T-cell (primary cell): ENCODE measurements at regions of chr5 and their contacts with region 1.

Region 1: GRCh38 chr5:154060606-154061005 is 21.8 kb downstream of the MFAP3 start:
- DNase-seq: no peak
- ATAC-seq: no peak
- H3K4me3 ChIP-seq: no peak overlapping the region
- H3K4me3 Mint-ChIP-seq: no peak overlapping the region
- H3K27ac ChIP-seq: no peak overlapping the region
- H3K27ac Mint-ChIP-seq: no peak overlapping the region
- H3K4me1 ChIP-seq: peaks cover 0 to 8% of the 10 kb centered on the region in 2 experiments
- H3K4me1 Mint-ChIP-seq: peaks cover 20 to 23% (median 22%) of the 10 kb centered on the region in 3 donors
- H3K27me3 ChIP-seq: no peaks in the 10 kb centered on the region
- H3K27me3 Mint-ChIP-seq: no peaks in the 10 kb centered on the region

Region 2: DNA sequence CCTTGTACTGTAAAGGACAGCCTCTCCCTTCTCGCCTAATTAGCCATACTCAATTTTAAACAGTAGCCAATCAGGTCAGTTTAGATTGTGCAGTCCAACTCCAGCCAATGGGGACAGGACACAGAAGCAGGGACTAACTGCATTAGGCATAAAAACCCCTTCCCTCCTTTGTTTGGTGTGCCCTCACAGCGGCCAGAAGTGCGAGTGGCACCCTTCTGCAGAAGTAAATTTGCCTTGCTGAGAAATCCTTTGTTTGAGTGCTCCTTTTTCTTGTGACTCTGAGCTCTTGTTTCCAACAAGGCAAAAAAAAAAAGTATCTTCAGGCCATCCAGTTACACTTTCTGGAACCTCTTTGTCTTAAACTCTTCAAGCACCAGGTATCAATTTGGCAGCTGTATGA is 119.3 kb before region 1 on chr5:
- CTCF ChIA-PET with region 1: interaction called in 1 of 2 experiments, 13 read pairs
- POLR2A ChIA-PET with region 1: no interaction called
- DNase-seq: no peak
- ATAC-seq: no peak
- H3K4me3 ChIP-seq: peak overlapping the region in 1 of 2 donors; percentile 15
- H3K4me3 Mint-ChIP-seq: no peak overlapping the region
- H3K27ac ChIP-seq: no peak overlapping the region
- H3K27ac Mint-ChIP-seq: no peak overlapping the region
- H3K4me1 ChIP-seq: no peaks in the 10 kb centered on the region
- H3K4me1 Mint-ChIP-seq: no peaks in the 10 kb centered on the region
- H3K27me3 ChIP-seq: no peaks in the 10 kb centered on the region
- H3K27me3 Mint-ChIP-seq: peaks cover 0 to 14% of the 10 kb centered on the region in 2 donors

Region 3: GRCh38 chr5:155884041-155884440 is 1823.4 kb after region 1 on chr5:
- CTCF ChIA-PET with region 1: no interaction called
- POLR2A ChIA-PET with region 1: no interaction called
- DNase-seq: peak in 8 of 35 experiments; percentile 0 to 22 (median 4)
- ATAC-seq: no peak
- H3K4me3 ChIP-seq: no peak overlapping the region
- H3K4me3 Mint-ChIP-seq: no peak overlapping the region
- H3K27ac ChIP-seq: no peak overlapping the region
- H3K27ac Mint-ChIP-seq: no peak overlapping the region
- H3K4me1 ChIP-seq: no peaks in the 10 kb centered on the region
- H3K4me1 Mint-ChIP-seq: peaks cover 0 to 10% (median 2%) of the 10 kb centered on the region in 3 donors
- H3K27me3 ChIP-seq: no peaks in the 10 kb centered on the region
- H3K27me3 Mint-ChIP-seq: peaks cover 0 to 3% of the 10 kb centered on the region in 2 donors